ENCODE measurements at regions of chrX and their contacts with region 1.

Region 1: GRCh38 chrX:123779908-123780396 is 47.1 kb upstream of the THOC2 start:
- DNase-seq: peak in 1 of 2 experiments; percentile 61
- ATAC-seq: peak in 1 of 2 experiments; percentile 15; a peak in 1 of 6 replicates
- H3K4me3 ChIP-seq: no peak overlapping the region
- H3K27ac ChIP-seq: peak overlapping the region; percentile 68 to 83
- H3K4me1 ChIP-seq: peaks cover 37% of the 10 kb centered on the region
- CTCF ChIP-seq: no peak
- EP300 ChIP-seq: no peak
- POLR2A ChIP-seq: no peak
- RAD21 ChIP-seq: no peak

Region 2: GRCh38 chrX:123201720-123202119 is 578.2 kb before region 1 on chrX:
- CTCF ChIA-PET with region 1: no interaction called
- POLR2A ChIA-PET with region 1: no interaction called
- DNase-seq: no peak
- ATAC-seq: no peak
- H3K4me3 ChIP-seq: no peak overlapping the region
- H3K27ac ChIP-seq: no peak overlapping the region
- H3K4me1 ChIP-seq: no peaks in the 10 kb centered on the region
- CTCF ChIP-seq: no peak
- EP300 ChIP-seq: no peak
- POLR2A ChIP-seq: no peak
- RAD21 ChIP-seq: no peak

Region 3: GRCh38 chrX:123732670-123733363 is 47.1 kb before region 1 on chrX and contains the start of gene THOC2:
- CTCF ChIA-PET with region 1: interaction called, 16 read pairs
- POLR2A ChIA-PET with region 1: interaction called, 10 read pairs
- DNase-seq: peak; percentile 77 to 91
- ATAC-seq: peak; percentile 96 to 98
- H3K4me3 ChIP-seq: peak within 1 kb of the TSS; percentile 80
- H3K27ac ChIP-seq: peak within 1 kb of the TSS; percentile 89 to 98
- H3K4me1 ChIP-seq: peaks cover 37% of the 10 kb centered on the region; the same call in 2 of the 3 replicates
- CTCF ChIP-seq: no peak
- EP300 ChIP-seq: no peak
- POLR2A ChIP-seq: peak; percentile 44
- RAD21 ChIP-seq: peak in 1 of 2 experiments; percentile 37; a peak in 2 of 5 replicates
- polyA plus RNA-seq, gene THOC2: 119 and 155 TPM in 2 replicates

Region 4: GRCh38 chrX:123764967-123765871 is 14.7 kb before region 1 on chrX:
- CTCF ChIA-PET with region 1: interaction called, 31 read pairs
- POLR2A ChIA-PET with region 1: interaction called, 13 read pairs
- DNase-seq: peak; percentile 84 to 91
- ATAC-seq: peak; percentile 100
- H3K4me3 ChIP-seq: peak overlapping the region; percentile 46
- H3K27ac ChIP-seq: peak overlapping the region; percentile 86
- H3K4me1 ChIP-seq: 0 out of 3 replicates have a peak, but pooled peaks cover 4% of the 10 kb centered on the region
- CTCF ChIP-seq: no peak
- EP300 ChIP-seq: no peak
- POLR2A ChIP-seq: peak; percentile 43
- RAD21 ChIP-seq: no peak

Region 5: GRCh38 chrX:123797543-123798447 is 17.8 kb after region 1 on chrX:
- CTCF ChIA-PET with region 1: interaction called, 31 read pairs
- POLR2A ChIA-PET with region 1: interaction called, 20 read pairs
- DNase-seq: peak in 1 of 2 experiments; percentile 47
- ATAC-seq: peak; percentile 50 to 80; a peak in 3 of 6 replicates
- H3K4me3 ChIP-seq: no peak overlapping the region
- H3K27ac ChIP-seq: peak overlapping the region; percentile 66 to 85
- H3K4me1 ChIP-seq: peaks cover 26% of the 10 kb centered on the region
- CTCF ChIP-seq: no peak
- EP300 ChIP-seq: no peak
- POLR2A ChIP-seq: no peak
- RAD21 ChIP-seq: no peak

Region 6: DNA sequence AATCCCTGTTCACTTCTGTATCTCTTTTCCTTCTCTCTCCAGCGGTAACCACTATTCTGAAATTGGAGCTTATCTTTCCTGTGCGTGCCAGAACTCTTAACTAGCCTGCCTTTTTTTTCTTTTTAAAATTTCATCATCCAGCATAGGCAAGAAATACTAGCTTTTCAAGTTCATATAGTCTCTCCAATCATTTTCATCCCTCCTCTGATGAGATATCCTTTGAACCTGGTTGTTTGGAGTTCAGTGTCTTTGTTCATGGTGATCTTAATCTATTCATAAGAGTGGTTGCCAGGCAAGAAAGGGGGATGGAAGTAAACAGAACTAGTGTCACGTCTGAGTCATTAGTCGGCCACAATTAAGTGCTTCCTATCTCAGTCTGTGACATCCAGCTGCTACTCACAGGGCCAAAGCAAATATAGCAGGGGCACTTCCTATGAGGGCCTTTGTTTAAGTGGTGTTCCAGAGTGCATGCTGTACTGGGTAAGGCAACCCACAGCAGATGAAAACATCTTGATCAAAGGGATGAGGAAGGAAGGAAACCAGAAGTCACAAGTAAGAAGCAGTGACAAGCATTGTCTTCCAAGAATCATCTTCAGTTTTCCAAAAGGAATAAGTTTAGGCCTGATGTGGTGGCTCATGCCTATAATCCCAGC is 23.5 kb after region 1 on chrX:
- CTCF ChIA-PET with region 1: interaction called, 31 read pairs
- POLR2A ChIA-PET with region 1: interaction called, 20 read pairs
- DNase-seq: peak; percentile 66 to 95
- ATAC-seq: peak; percentile 92 to 96
- H3K4me3 ChIP-seq: no peak overlapping the region
- H3K27ac ChIP-seq: peak overlapping the region; percentile 86
- H3K4me1 ChIP-seq: peaks cover 55% of the 10 kb centered on the region
- CTCF ChIP-seq: no peak
- EP300 ChIP-seq: peak; percentile 21 to 64; a peak in 3 of 5 replicates
- POLR2A ChIP-seq: no peak
- RAD21 ChIP-seq: no peak

Region 7: DNA sequence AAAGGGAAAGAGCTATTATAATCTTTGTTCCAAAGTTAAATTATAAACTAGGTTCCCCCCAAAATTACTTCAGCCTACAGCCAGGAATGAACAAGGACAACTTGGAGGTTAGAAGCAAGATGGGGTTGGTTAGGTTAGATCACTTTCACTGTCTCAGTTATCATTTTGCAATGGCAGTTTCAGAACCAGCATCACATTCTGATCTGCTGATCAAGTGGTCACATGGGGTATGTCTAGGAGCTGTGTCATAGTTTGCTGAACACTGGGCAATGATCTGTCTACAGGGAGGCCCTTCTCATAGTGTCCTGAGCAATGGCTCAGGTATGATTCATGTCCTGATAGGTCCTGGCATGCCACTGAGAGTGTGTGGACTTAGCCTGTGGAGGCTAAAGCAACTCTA is 38.3 kb after region 1 on chrX:
- CTCF ChIA-PET with region 1: interaction called, 17 read pairs
- POLR2A ChIA-PET with region 1: no interaction called
- DNase-seq: peak; percentile 68 to 87
- ATAC-seq: peak; percentile 87 to 94
- H3K4me3 ChIP-seq: no peak overlapping the region
- H3K27ac ChIP-seq: peak overlapping the region; percentile 83 to 86
- H3K4me1 ChIP-seq: peaks cover 31% of the 10 kb centered on the region
- CTCF ChIP-seq: no peak
- EP300 ChIP-seq: peak in 1 of 2 experiments; percentile 31; a peak in 2 of 5 replicates
- POLR2A ChIP-seq: no peak
- RAD21 ChIP-seq: no peak

Region 8: GRCh38 chrX:124401696-124402095 is 621.7 kb after region 1 on chrX:
- CTCF ChIA-PET with region 1: no interaction called
- POLR2A ChIA-PET with region 1: no interaction called
- DNase-seq: no peak
- ATAC-seq: no peak
- H3K4me3 ChIP-seq: no peak overlapping the region
- H3K27ac ChIP-seq: no peak overlapping the region
- H3K4me1 ChIP-seq: peaks cover 5% of the 10 kb centered on the region; the same call in 2 of the 3 replicates
- CTCF ChIP-seq: no peak
- EP300 ChIP-seq: no peak
- POLR2A ChIP-seq: no peak
- RAD21 ChIP-seq: no peak

Measured in A549 (cell line).